AG04450 (cell line): ENCODE measurements at regions of chr12 and their contacts with region 1.

Region 1: GRCh38 chr12:105041186-105041585 is 43.1 kb downstream of the ALDH1L2 start:
- DNase-seq: no peak
- H3K4me3 ChIP-seq: no peak overlapping the region
- H3K27ac ChIP-seq: no peak overlapping the region
- H3K27me3 ChIP-seq: no peaks in the 10 kb centered on the region
- CTCF ChIP-seq: no peak

Region 2: GRCh38 chr12:105025890-105026289 is 15.3 kb before region 1 on chr12:
- CTCF ChIA-PET with region 1: no interaction called
- POLR2A ChIA-PET with region 1: no interaction called
- DNase-seq: peak; percentile 15
- H3K4me3 ChIP-seq: no peak overlapping the region
- H3K27ac ChIP-seq: no peak overlapping the region
- H3K27me3 ChIP-seq: no peaks in the 10 kb centered on the region
- CTCF ChIP-seq: no peak

Region 3: DNA sequence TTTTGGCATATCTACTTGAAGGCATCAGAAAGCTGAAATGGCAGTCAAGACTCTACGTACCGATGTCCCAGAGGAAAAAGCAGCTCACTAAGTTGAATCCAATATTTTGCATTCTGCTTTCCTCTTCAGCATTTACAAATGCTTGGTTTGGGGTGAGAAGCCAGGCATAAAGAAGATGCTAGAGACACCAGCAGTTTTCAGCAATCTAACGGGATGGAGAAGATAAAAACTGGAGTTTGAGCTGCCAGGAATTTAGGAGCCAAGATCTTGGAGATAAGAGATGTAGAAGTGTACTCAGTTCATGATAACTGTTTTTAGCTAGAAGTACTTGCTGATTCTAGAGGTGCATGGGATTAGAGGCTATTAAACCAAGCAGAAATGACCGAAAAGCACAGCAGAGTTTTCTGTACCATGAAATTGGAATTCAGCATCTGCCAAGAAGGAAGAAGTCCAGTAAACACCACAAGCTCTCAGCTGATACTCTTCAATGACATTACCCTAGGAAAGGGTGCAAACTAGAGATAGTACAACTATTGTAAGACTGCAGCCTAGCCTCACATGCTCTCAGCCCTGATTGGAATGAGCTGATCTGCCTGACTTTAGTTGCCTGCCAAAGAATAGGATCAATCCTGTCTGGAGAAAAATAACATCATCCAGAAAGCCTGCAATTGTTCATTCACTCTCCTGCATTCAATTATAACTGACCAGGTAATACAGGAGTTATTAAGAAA is 50.5 kb after region 1 on chr12:
- CTCF ChIA-PET with region 1: interaction called, 10 read pairs
- POLR2A ChIA-PET with region 1: no interaction called
- DNase-seq: no peak
- H3K4me3 ChIP-seq: no peak overlapping the region
- H3K27ac ChIP-seq: no peak overlapping the region
- H3K27me3 ChIP-seq: peaks cover 8% of the 10 kb centered on the region
- CTCF ChIP-seq: no peak

Region 4: DNA sequence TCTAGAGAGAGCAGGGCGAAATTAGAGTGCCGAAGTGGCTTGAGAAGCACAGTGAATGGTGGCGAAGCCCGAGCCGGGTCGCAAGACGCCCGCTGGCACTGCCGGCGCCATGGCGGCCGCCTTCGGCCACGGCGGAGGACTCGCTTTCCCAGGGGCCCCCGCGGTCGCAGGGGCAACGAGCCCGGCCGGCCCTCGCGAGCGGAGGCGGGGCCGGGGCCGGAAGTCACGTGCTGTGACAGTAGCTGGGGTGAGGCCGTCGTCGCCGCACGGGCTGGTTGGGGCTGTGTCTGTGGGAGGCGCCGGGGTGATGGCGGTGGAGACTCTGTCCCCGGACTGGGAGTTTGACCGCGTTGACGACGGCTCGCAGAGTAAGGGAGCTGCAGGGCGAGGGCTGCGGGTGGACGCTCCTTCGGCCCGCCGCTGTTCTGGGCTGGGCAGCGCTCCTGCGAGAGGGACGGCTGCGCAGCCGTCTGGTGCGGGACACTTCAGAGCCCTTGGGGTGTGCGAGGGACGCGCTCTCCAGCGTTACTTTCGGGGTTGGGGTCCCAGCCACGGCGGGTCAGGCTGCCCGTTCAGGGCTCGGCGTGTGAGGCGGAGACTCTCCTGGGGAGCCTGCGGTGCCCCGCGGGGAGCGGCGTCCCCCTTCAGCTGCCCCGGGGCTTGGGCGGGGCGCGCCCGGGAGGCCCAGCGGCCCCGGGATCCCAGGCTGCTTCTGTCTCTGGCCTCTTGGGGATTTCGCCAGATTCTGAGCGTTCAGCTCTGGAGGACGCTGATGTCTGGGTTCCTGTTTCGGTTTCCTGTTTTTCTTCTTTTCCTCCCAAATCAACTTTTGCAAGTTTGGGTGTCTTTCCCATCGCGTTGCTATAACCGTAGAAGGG is 66.5 kb after region 1 on chr12 and contains the start of gene WASHC4:
- CTCF ChIA-PET with region 1: no interaction called
- POLR2A ChIA-PET with region 1: no interaction called
- DNase-seq: peak; percentile 47
- H3K4me3 ChIP-seq: peak within 1 kb of the TSS; percentile 88
- H3K27ac ChIP-seq: peak within 1 kb of the TSS; percentile 81
- H3K27me3 ChIP-seq: no peaks in the 10 kb centered on the region
- CTCF ChIP-seq: no peak
- polyA plus RNA-seq, gene WASHC4: 33.8 and 59.4 TPM in 2 replicates